Mammary epithelial cell (primary cell): ENCODE measurements at regions of chr6 and their contacts with region 1.

Region 1: DNA sequence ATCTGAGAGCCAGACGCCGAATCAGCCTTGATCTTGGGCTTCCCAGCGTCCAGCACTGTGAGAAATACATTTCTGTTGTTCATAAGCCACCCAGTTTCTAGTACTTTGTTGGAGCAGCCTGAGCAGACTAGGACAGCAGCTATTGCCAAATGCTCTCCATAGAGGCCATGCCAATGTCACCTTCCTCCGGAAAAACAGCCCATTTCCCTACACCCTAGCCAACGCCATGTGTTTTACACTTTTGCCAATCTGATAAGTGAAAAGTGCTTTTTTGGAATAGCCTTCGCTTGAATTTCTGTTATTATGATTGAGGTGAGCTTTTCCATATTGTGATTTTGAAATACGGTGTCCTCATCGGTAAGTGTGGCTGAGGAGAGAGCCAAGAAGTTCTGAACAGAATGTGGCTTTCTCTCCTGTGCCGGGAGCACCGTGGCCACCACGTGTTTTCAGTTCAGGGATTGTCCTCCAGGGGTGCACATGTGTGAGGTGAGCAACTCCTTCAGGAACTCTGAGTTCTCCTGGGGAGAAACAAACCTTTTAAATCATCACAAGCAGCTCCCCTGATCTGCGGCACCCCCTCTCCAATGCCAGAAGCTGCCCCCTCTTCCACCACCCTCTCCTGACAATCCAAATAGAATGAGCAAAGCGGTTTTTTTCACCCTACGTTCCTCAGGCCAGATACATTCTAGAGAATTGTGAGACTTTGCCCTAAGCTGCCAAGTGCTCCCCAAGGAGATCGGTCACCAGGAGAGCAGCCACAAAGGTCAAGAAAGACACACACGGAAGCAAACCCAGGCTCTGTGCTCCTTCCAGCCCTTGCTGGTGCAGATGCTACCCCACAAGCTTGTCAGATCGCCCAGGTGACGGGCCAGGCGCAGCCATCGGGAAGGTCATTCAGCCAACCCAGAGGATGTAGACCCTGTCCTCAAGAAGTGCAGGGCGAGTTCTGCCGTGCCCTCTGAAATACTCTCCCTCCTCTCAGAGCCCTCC is 36.0 kb downstream of the TAF8 start:
- DNase-seq: no peak
- H3K4me3 ChIP-seq: no peak overlapping the region
- H3K27ac ChIP-seq: no peak overlapping the region
- H3K4me1 ChIP-seq: peaks cover 14% of the 10 kb centered on the region
- H3K27me3 ChIP-seq: no peaks in the 10 kb centered on the region
- CTCF ChIP-seq: peak; percentile 36 to 41

Region 2: GRCh38 chr6:42118162-42119001 is 32.0 kb after region 1 on chr6:
- CTCF ChIA-PET with region 1: no interaction called
- dilution Hi-C with region 1: no loop called
- in situ Hi-C with region 1: no loop called
- intact Hi-C with region 1: loop called (anchors 2 kb)
- DNase-seq: peak; percentile 85
- H3K4me3 ChIP-seq: no peak overlapping the region
- H3K27ac ChIP-seq: peak overlapping the region; percentile 29
- H3K4me1 ChIP-seq: peaks cover 49% of the 10 kb centered on the region
- H3K27me3 ChIP-seq: no peaks in the 10 kb centered on the region
- CTCF ChIP-seq: no peak

Region 3: GRCh38 chr6:42158011-42158410 is 71.7 kb after region 1 on chr6:
- CTCF ChIA-PET with region 1: no interaction called
- dilution Hi-C with region 1: no loop called
- in situ Hi-C with region 1: loop called in 1 of 2 experiments (anchors 5 kb)
- intact Hi-C with region 1: no loop called
- DNase-seq: no peak
- H3K4me3 ChIP-seq: no peak overlapping the region
- H3K27ac ChIP-seq: no peak overlapping the region
- H3K4me1 ChIP-seq: peaks cover 4% of the 10 kb centered on the region
- H3K27me3 ChIP-seq: no peaks in the 10 kb centered on the region
- CTCF ChIP-seq: no peak

Region 4: GRCh38 chr6:42563697-42564505 is 477.6 kb after region 1 on chr6 and contains the start of gene UBR2:
- CTCF ChIA-PET with region 1: no interaction called
- dilution Hi-C with region 1: loop called (anchors 5 kb)
- in situ Hi-C with region 1: no loop called
- intact Hi-C with region 1: no loop called
- DNase-seq: peak; percentile 98
- H3K4me3 ChIP-seq: peak within 1 kb of the TSS; percentile 78 to 84 (median 83)
- H3K27ac ChIP-seq: peak within 1 kb of the TSS; percentile 79
- H3K4me1 ChIP-seq: peaks cover 4% of the 10 kb centered on the region
- H3K27me3 ChIP-seq: no peaks in the 10 kb centered on the region
- CTCF ChIP-seq: peak in 1 of 2 donors; percentile 39
- total RNA-seq, gene UBR2: 23.8 to 31.3 TPM